ENCODE measurements at regions of chr9 and their contacts with region 1.

Region 1: GRCh38 chr9:136482793-136483588 is at the start of gene SEC16A:
- DNase-seq: peak; percentile 69
- H3K4me3 ChIP-seq: peak within 1 kb of the TSS; percentile 70
- H3K27me3 ChIP-seq: no peaks in the 10 kb centered on the region
- CTCF ChIP-seq: no peak
- polyA plus RNA-seq, gene SEC16A: 15.5 and 24.4 TPM in 2 replicates

Region 2: GRCh38 chr9:136502942-136503550 is 20.1 kb after region 1 on chr9:
- CTCF ChIA-PET with region 1: interaction called, 11 read pairs
- POLR2A ChIA-PET with region 1: no interaction called
- DNase-seq: no peak
- H3K4me3 ChIP-seq: no peak overlapping the region
- H3K27me3 ChIP-seq: no peaks in the 10 kb centered on the region
- CTCF ChIP-seq: no peak

Region 3: GRCh38 chr9:136614372-136614922 is 131.5 kb after region 1 on chr9:
- CTCF ChIA-PET with region 1: interaction called, 11 read pairs
- POLR2A ChIA-PET with region 1: no interaction called
- DNase-seq: peak; percentile 14
- H3K4me3 ChIP-seq: no peak overlapping the region
- H3K27me3 ChIP-seq: no peaks in the 10 kb centered on the region
- CTCF ChIP-seq: no peak

Region 4: DNA sequence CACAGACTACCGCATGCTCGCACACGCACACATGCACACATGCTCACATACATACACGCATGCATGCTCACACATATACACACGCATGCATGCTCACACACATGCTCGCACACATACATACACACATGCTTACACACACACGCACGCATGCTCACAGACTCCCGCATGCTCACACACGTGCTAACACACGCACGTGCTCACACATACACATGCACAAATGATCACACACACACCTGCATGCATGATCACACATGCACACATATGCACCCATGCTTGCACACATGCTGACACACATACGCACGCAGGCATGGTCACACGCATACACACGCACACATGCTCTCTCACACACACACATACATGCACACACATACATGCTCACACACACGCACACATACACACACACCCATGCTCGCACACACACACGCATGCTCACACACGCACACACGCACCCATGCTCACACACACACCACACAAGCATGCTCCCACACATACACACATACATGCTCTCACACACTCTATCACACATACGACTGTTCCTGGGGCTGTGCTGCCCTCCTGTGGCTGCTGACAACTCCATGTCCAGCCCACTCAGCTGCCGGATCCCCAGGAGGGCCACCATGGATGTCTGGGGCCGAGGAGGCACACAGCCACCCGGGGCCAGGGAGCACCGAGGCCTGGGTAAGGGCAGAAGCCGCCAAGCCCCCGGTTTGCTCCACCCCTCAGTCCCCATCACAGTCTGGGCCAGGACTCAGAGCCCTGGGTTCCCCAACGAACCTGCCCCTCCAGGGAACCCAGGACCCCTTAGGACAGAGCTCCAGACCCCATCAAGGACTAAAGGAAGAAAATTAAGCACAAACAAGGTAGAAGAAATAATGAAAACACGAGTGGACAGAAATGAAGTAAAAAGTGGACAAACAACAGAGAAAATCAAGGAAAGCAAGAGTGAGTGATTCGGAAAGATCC is 148.3 kb after region 1 on chr9:
- CTCF ChIA-PET with region 1: interaction called, 385 read pairs
- POLR2A ChIA-PET with region 1: no interaction called
- DNase-seq: no peak
- H3K4me3 ChIP-seq: no peak overlapping the region
- H3K27me3 ChIP-seq: no peaks in the 10 kb centered on the region
- CTCF ChIP-seq: peak; percentile 86

Region 5: GRCh38 chr9:136644598-136645351 is 161.8 kb after region 1 on chr9:
- CTCF ChIA-PET with region 1: interaction called, 16 read pairs
- POLR2A ChIA-PET with region 1: no interaction called
- DNase-seq: no peak
- H3K4me3 ChIP-seq: no peak overlapping the region
- H3K27me3 ChIP-seq: peaks cover 24% of the 10 kb centered on the region
- CTCF ChIP-seq: peak; percentile 86